Dorsolateral prefrontal cortex (tissue), 120 donors: ENCODE measurements at regions of chr5 and their contacts with region 1.

Region 1: DNA sequence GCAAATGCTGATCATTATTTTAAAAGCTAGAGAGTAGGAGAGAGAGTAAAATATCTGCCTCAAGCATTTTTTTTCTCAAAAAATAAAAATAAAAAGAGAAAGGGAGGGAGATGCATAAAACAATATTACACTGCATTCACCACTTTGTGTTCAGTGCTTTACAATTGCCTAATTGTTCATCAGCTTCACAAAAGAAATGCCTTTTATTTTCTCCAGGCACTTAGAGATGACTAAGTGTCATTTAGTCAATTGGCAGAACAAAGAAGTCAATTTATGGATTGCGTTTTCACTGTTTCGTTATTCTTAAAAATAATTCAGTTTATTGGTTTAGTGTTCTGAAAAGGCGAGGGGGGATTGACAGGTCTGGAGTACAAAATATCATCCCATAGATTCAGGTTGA is 232.5 kb upstream of the CCNH start:
- DNase-seq: no peak
- H3K4me3 ChIP-seq: peak overlapping the region in 19 of 59 donors; percentile 1 to 48 (median 21)
- H3K27ac ChIP-seq: peak overlapping the region in 58 of 59 donors; percentile 16 to 98 (median 89)
- H3K27me3 ChIP-seq: no peaks in the 10 kb centered on the region
- CTCF ChIP-seq: peak in 2 of 56 donors; percentile 11 to 20

Region 2: DNA sequence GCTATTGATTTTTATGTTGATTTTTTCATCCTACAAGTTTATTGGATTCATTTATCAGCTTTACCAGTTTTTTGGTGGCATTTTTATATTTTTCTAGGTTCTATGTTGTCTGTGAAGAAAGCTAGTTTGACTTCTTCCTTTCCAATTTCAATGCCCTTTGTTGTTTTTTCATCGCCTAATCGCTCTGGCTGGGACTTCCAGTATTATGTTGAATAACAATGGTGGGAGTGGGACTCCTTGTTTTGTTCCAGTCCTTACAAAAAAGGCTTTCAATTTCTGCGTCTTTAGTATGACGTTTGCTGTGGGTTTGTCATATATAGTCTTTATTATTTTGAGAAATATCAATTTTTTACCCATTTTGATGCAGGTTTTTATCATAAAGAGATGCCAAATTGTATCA is 56.9 kb before region 1 on chr5:
- intact Hi-C with region 1: loop called in 1 of 2 experiments (anchors 2 kb)
- DNase-seq: peak in 1 of 10 donors; percentile 24
- H3K4me3 ChIP-seq: peak overlapping the region in 3 of 59 donors; percentile 3 to 26 (median 15)
- H3K27ac ChIP-seq: peak overlapping the region; percentile 60 to 99 (median 91)
- H3K27me3 ChIP-seq: no peaks in the 10 kb centered on the region
- CTCF ChIP-seq: peak in 4 of 56 donors; percentile 6 to 14 (median 12)